ENCODE measurements at regions of chr20 and their contacts with region 1.

Region 1: GRCh38 chr20:23415959-23416583 is 5.2 kb downstream of the NAPB start:
- DNase-seq: peak; percentile 51
- ATAC-seq: peak; percentile 24
- H3K4me3 Mint-ChIP-seq: no peak overlapping the region
- H3K27ac Mint-ChIP-seq: peak overlapping the region; percentile 64
- H3K4me1 Mint-ChIP-seq: peaks cover 48% of the 10 kb centered on the region
- H3K27me3 Mint-ChIP-seq: no peaks in the 10 kb centered on the region

Region 2: DNA sequence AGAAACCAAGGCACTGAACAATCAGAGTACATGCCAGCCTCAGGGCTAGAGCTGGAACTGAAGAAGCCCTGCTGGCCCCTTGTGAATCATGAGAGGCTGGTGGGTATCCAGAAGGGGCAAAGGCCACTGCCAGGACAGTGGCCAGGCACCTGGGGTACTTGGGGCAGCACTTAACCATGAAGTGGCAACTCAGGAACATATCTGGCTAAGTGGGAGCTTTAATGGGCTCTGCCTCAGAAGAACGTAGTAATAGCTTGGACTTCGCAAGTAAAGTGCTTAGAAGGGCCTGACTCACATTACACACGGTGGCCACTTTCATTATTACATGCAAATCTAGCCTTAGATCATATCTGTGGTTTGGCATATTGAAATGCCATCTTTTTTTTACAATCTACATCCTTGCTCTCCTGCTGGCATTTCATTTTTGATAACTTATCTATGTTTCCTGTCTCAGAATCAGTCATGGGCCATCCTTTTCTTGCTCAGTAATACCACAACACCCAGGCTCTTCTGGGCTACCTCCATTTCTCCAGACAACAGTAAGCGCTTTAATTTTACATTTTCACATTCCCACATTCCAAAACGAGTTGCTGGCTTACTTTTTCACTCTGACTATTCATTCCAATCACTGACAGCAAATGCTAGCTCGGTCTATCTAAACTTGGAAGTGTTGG is 16.4 kb before region 1 on chr20:
- CTCF ChIA-PET with region 1: interaction called, 18 read pairs
- DNase-seq: peak; percentile 59
- ATAC-seq: peak; percentile 90
- H3K4me3 Mint-ChIP-seq: peak overlapping the region; percentile 14
- H3K27ac Mint-ChIP-seq: peak overlapping the region; percentile 74
- H3K4me1 Mint-ChIP-seq: peaks cover 63% of the 10 kb centered on the region
- H3K27me3 Mint-ChIP-seq: no peaks in the 10 kb centered on the region

Region 3: DNA sequence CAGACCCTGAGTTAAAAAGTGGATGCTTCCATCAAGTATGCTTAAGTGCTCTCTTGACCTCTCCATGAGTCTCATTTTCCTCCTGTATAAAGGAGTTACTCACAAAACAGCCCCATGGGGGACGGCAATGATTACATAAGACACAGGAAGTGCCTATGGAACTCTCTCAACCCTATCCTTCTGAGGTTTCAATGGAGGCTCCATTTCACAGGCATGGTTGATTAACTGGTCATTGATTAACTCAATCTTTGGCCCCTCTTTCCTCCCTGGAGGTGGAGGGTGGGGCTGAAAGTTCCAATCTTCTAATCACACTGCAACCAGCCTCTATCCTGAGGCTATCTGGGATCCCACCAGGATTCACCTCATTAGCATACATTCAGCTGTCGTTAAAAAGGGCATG is 104.1 kb after region 1 on chr20:
- CTCF ChIA-PET with region 1: no interaction called
- DNase-seq: no peak
- ATAC-seq: no peak
- H3K4me3 Mint-ChIP-seq: no peak overlapping the region
- H3K27ac Mint-ChIP-seq: no peak overlapping the region
- H3K4me1 Mint-ChIP-seq: no peaks in the 10 kb centered on the region
- H3K27me3 Mint-ChIP-seq: no peaks in the 10 kb centered on the region

Measured in activated CD8-positive, alpha-beta memory T cell treated with anti-CD3 and anti-CD28 coated beads, Interleukin-2, amount 10 ng/mL, durations not matched to agents 7 days and 5 days (primary cell).